CD4-positive, alpha-beta memory T cell (primary cell): ENCODE measurements at regions of chr9 and their contacts with region 1.

Region 1: GRCh38 chr9:36407122-36407723 is 7.2 kb upstream of the RNF38 start:
- DNase-seq: peak; percentile 67 to 73 (median 71)
- H3K4me3 ChIP-seq: no peak overlapping the region
- H3K4me3 Mint-ChIP-seq: no peak overlapping the region
- H3K27ac ChIP-seq: peak overlapping the region; percentile 15
- H3K27ac Mint-ChIP-seq: peak overlapping the region; percentile 33 to 92 (median 70)
- H3K4me1 ChIP-seq: peaks cover 9% of the 10 kb centered on the region
- H3K4me1 Mint-ChIP-seq: peaks cover 11 to 27% (median 19%) of the 10 kb centered on the region in 4 donors
- H3K27me3 ChIP-seq: no peaks in the 10 kb centered on the region
- H3K27me3 Mint-ChIP-seq: no peaks in the 10 kb centered on the region

Region 2: DNA sequence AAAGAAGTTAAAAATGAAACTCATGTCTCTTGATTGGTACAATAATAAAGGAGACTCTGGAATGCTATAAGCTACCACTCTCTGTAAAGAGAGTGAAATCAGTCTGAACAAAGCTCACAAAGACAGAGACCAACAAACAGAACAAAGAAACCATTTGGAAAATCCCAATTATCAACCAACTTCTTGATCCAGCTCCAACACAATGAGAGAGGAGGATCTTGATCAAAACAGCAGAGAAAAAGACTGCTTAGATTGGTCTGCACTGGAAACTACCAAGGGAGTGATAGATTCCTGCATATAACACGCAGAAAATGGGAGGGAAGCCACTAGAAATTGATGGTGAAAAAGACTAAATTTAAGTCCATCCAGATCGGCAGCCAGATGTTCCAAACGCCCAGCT is 16.0 kb after region 1 on chr9:
- CTCF ChIA-PET with region 1: interaction called, 33 read pairs
- POLR2A ChIA-PET with region 1: no interaction called
- intact Hi-C with region 1: no loop called
- DNase-seq: no peak
- H3K4me3 ChIP-seq: no peak overlapping the region
- H3K4me3 Mint-ChIP-seq: no peak overlapping the region
- H3K27ac ChIP-seq: no peak overlapping the region
- H3K27ac Mint-ChIP-seq: peak overlapping the region in 2 of 7 donors; percentile 18 to 31
- H3K4me1 ChIP-seq: peaks cover 17% of the 10 kb centered on the region
- H3K4me1 Mint-ChIP-seq: peaks cover 25 to 43% (median 34%) of the 10 kb centered on the region in 4 donors
- H3K27me3 ChIP-seq: no peaks in the 10 kb centered on the region
- H3K27me3 Mint-ChIP-seq: no peaks in the 10 kb centered on the region

Region 3: GRCh38 chr9:36441966-36442365 is 34.7 kb after region 1 on chr9:
- CTCF ChIA-PET with region 1: interaction called, 77 read pairs
- POLR2A ChIA-PET with region 1: no interaction called
- intact Hi-C with region 1: no loop called
- DNase-seq: no peak
- H3K4me3 ChIP-seq: no peak overlapping the region
- H3K4me3 Mint-ChIP-seq: peak overlapping the region in 3 of 8 donors; percentile 2 to 48 (median 26)
- H3K27ac ChIP-seq: no peak overlapping the region
- H3K27ac Mint-ChIP-seq: peak overlapping the region in 1 of 7 donors; percentile 11
- H3K4me1 ChIP-seq: peaks cover 48% of the 10 kb centered on the region
- H3K4me1 Mint-ChIP-seq: peaks cover 43 to 74% (median 53%) of the 10 kb centered on the region in 4 donors
- H3K27me3 ChIP-seq: no peaks in the 10 kb centered on the region
- H3K27me3 Mint-ChIP-seq: no peaks in the 10 kb centered on the region

Region 4: DNA sequence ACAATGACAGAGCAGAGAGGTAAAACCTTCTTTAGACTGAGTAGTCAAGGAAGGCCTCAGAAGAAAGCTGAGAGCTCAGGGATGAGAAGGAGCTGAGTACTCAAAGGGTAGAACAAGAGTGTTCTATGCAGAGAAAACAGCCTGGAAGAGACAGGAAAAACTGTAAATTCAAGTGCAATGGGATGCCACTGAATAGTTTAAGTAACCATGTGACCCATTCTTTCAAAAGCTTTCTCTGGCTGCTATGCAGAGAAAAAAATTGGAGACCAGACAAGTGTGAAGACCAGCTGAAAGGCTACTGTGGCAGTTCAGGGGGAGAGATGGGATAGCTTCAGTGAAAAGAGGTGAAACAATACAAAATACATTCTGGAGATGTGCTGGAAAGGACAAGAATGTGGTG is 54.1 kb after region 1 on chr9:
- CTCF ChIA-PET with region 1: interaction called, 11 read pairs
- POLR2A ChIA-PET with region 1: interaction called, 5 read pairs
- intact Hi-C with region 1: no loop called
- DNase-seq: no peak
- H3K4me3 ChIP-seq: no peak overlapping the region
- H3K4me3 Mint-ChIP-seq: peak overlapping the region in 1 of 8 donors; percentile 28
- H3K27ac ChIP-seq: no peak overlapping the region
- H3K27ac Mint-ChIP-seq: peak overlapping the region; percentile 2 to 64 (median 43)
- H3K4me1 ChIP-seq: peaks cover 29% of the 10 kb centered on the region
- H3K4me1 Mint-ChIP-seq: peaks cover 43 to 68% (median 53%) of the 10 kb centered on the region in 4 donors
- H3K27me3 ChIP-seq: no peaks in the 10 kb centered on the region
- H3K27me3 Mint-ChIP-seq: no peaks in the 10 kb centered on the region

Region 5: DNA sequence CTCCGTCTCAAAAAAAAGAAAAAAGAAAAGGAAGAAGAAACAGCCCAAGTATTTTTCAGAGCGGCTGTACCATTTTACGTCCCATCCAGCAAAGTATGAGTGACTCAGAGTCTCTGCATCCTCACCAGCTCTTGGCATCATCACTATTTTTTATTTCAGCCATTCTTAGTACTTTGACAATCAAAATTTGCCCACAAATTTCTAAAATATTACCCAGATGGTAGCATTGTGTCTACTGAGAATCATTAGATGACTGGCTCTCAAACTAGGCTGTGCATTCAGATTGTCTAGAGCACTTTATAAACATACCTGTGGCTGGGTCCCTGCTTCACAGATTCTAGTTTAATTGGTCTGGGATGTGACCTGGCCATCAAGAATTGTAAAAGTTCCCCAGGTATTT is 143.9 kb after region 1 on chr9:
- CTCF ChIA-PET with region 1: interaction called, 505 read pairs
- POLR2A ChIA-PET with region 1: interaction called, 18 read pairs
- intact Hi-C with region 1: loop called (anchors 1 kb)
- DNase-seq: no peak
- H3K4me3 ChIP-seq: no peak overlapping the region
- H3K4me3 Mint-ChIP-seq: no peak overlapping the region
- H3K27ac ChIP-seq: no peak overlapping the region
- H3K27ac Mint-ChIP-seq: no peak overlapping the region
- H3K4me1 ChIP-seq: no peaks in the 10 kb centered on the region
- H3K4me1 Mint-ChIP-seq: peaks cover 0 to 3% (median 1%) of the 10 kb centered on the region in 4 donors
- H3K27me3 ChIP-seq: no peaks in the 10 kb centered on the region
- H3K27me3 Mint-ChIP-seq: peaks cover 2 to 4% of the 10 kb centered on the region in 2 donors

Region 6: GRCh38 chr9:36728651-36729520 is 321.7 kb after region 1 on chr9:
- CTCF ChIA-PET with region 1: interaction called, 64 read pairs
- POLR2A ChIA-PET with region 1: interaction called, 5 read pairs
- intact Hi-C with region 1: no loop called
- DNase-seq: peak; percentile 37 to 52 (median 44)
- H3K4me3 ChIP-seq: no peak overlapping the region
- H3K4me3 Mint-ChIP-seq: no peak overlapping the region
- H3K27ac ChIP-seq: no peak overlapping the region
- H3K27ac Mint-ChIP-seq: peak overlapping the region in 1 of 7 donors; percentile 11
- H3K4me1 ChIP-seq: no peaks in the 10 kb centered on the region
- H3K4me1 Mint-ChIP-seq: no peaks in the 10 kb centered on the region
- H3K27me3 ChIP-seq: no peaks in the 10 kb centered on the region
- H3K27me3 Mint-ChIP-seq: no peaks in the 10 kb centered on the region